IMR-90 (cell line): ENCODE measurements at regions of chr9 and their contacts with region 1.

Region 1: DNA sequence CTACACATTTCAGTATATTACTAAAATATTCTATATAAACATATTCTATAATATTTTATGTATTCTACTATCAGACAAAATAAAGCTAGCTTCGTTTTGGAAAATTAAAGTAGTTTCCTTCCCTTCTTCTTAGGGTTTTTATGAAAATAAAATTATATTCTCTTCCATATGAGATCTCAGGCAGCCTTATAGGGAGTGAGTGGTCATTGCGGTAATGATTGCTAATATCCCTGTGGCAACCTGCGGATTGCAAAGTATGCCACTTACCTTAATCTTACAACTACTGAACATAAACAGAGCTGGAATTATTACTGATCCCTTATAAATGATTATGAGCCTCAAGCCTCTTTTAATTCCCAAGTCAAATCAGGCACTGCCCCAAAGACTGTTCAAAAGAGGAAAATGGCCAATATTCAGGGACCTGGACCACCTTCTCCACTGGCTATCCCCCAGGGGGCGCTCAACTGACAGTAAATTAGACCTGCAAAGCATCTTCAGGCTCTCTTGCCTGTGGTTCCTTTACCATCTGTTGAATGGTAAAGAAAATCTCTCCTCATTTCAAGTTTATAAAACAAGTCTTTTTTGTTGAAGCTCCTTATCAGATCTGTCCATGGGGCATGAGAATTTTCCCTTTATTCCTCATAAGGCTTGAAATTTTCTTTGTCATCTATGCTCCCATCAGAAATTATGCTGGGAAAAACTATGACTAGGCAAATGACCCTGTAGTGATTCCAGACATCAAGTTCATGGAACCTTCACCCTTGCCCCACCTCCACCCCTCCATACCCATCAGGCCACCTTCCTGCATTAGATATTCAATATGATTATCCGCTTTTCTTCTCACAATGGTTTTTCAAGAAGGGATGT is 163.9 kb downstream of the CEMIP2 start:
- DNase-seq: peak; percentile 70
- ATAC-seq: peak; percentile 92
- H3K4me3 ChIP-seq: no peak overlapping the region
- H3K27ac ChIP-seq: no peak overlapping the region
- H3K4me1 ChIP-seq: no peaks in the 10 kb centered on the region
- H3K27me3 ChIP-seq: no peaks in the 10 kb centered on the region
- CTCF ChIP-seq: peak; percentile 83
- POLR2A ChIP-seq: no peak
- RAD21 ChIP-seq: peak; percentile 79

Region 2: DNA sequence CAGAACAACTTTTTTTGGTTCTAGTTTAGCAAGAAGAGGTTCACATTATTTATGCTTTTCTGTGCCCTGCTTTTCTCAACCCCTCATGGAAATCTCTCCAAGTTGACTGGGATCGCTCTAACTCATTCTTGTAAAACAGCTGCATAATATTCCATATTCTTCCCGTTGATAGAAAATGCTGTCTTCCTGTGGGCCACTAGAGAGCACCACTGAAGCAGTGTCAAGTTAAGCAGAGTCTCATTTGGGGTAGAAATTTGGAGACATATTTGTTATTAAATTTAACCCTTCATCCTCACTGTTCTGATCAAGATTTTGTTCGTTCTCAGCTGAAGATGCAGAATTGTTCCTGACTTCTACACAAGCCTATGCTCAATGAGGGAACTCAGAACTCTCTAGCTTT is 23.8 kb after region 1 on chr9:
- CTCF ChIA-PET with region 1: no interaction called
- POLR2A ChIA-PET with region 1: no interaction called
- dilution Hi-C with region 1: no loop called
- in situ Hi-C with region 1: no loop called
- intact Hi-C with region 1: no loop called
- DNase-seq: peak; percentile 6
- ATAC-seq: no peak
- H3K4me3 ChIP-seq: no peak overlapping the region
- H3K27ac ChIP-seq: no peak overlapping the region
- H3K4me1 ChIP-seq: no peaks in the 10 kb centered on the region
- H3K27me3 ChIP-seq: peaks cover 4% of the 10 kb centered on the region; the same call in 1 of the 2 replicates
- CTCF ChIP-seq: peak; percentile 39
- POLR2A ChIP-seq: no peak
- RAD21 ChIP-seq: peak; percentile 45; the same call in 1 of the 2 replicates

Region 3: DNA sequence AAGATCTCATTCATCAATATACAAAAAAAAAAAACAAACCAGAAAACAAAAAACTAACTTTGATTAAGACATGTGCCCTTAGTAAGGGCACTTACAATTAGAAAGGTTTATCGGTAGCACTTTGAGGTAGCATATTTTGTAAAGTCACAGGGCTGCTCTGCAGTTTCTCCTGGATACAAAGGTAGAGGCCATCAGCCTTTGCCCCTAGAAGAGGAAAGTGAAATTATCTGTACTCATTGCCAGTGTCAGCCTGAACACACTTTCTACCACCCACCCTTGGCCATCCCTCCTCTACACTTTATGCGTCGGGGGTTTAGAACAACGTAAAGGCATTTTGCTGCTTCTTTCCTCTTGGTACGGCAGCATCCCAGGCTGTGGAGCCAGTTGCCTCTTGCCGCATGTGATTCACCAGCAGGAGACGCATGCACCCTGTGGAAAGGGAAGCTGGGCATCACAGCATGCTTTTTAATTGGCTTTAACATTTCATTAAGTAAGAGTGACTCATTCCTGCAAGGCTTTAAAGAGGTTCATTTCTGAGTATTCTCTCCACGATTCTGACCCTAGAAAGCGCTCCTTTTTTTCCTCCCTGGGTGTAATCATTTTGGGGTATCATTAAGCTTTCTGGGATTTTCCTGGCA is 79.3 kb after region 1 on chr9:
- CTCF ChIA-PET with region 1: interaction called, 4 read pairs
- POLR2A ChIA-PET with region 1: no interaction called
- dilution Hi-C with region 1: no loop called
- in situ Hi-C with region 1: no loop called
- intact Hi-C with region 1: loop called (anchors 2 kb)
- DNase-seq: peak; percentile 61
- ATAC-seq: peak; percentile 53
- H3K4me3 ChIP-seq: no peak overlapping the region
- H3K27ac ChIP-seq: no peak overlapping the region
- H3K4me1 ChIP-seq: peaks cover 19% of the 10 kb centered on the region
- H3K27me3 ChIP-seq: no peaks in the 10 kb centered on the region
- CTCF ChIP-seq: peak; percentile 52
- POLR2A ChIP-seq: no peak
- RAD21 ChIP-seq: peak; percentile 54

Region 4: DNA sequence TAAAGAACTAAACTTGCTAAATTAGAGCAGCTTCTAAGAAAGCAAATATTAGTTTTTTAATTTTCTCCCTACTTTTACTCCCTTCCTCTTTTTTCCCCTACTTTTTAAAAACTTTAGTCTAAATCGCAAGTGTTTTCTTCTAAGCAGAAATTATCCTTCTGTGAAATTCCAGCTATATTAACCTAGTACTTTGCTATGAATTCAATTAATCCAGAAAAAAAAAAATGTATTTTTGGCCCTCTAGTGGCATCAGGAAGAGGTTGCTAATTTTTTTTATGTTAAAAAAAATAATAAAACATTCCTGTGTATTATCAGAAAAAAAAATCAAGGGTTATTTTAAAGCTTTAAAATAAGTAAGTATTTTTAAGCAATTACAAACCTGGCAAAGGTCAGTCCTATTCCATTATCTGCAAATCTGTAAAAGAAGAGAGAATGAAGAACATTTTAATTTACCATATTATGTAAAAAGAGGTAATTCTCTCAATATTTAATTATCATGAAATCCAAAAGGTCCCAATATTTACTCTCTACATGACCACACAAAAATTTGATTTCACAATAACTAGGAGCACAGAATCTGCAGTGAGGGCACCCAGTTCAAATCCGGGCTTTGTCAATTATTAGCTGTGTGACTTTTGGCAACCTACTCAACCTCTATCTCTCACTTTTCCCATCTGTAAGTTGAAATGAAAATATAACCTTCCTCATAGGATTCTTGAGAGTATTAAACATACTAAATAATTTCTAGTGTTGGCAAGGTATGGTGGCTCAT is 111.9 kb after region 1 on chr9:
- CTCF ChIA-PET with region 1: interaction called, 4 read pairs
- POLR2A ChIA-PET with region 1: no interaction called
- dilution Hi-C with region 1: no loop called
- in situ Hi-C with region 1: no loop called
- intact Hi-C with region 1: loop called (anchors 1 kb)
- DNase-seq: no peak
- ATAC-seq: no peak
- H3K4me3 ChIP-seq: no peak overlapping the region
- H3K27ac ChIP-seq: no peak overlapping the region
- H3K4me1 ChIP-seq: no peaks in the 10 kb centered on the region; the same call in 1 of the 2 replicates
- H3K27me3 ChIP-seq: no peaks in the 10 kb centered on the region
- CTCF ChIP-seq: peak; percentile 50
- POLR2A ChIP-seq: no peak
- RAD21 ChIP-seq: peak; percentile 36; the same call in 1 of the 2 replicates

Region 5: GRCh38 chr9:71768388-71769174 is 164.2 kb after region 1 on chr9 and contains the start of gene CEMIP2:
- CTCF ChIA-PET with region 1: interaction called, 3 read pairs
- POLR2A ChIA-PET with region 1: no interaction called
- dilution Hi-C with region 1: no loop called
- in situ Hi-C with region 1: loop called (anchors 10 kb)
- intact Hi-C with region 1: loop called (anchors 1 kb)
- DNase-seq: peak; percentile 86
- ATAC-seq: peak; percentile 86
- H3K4me3 ChIP-seq: peak within 1 kb of the TSS; percentile 98
- H3K27ac ChIP-seq: peak within 1 kb of the TSS; percentile 95
- H3K4me1 ChIP-seq: peaks cover 6% of the 10 kb centered on the region; the same call in 1 of the 2 replicates
- H3K27me3 ChIP-seq: 0 out of 2 replicates have a peak, but pooled peaks cover 1% of the 10 kb centered on the region
- CTCF ChIP-seq: peak; percentile 63
- POLR2A ChIP-seq: peak; percentile 98
- RAD21 ChIP-seq: peak; percentile 74
- total RNA-seq, gene CEMIP2: 58.6 and 65.2 TPM in 2 replicates

Region 6: GRCh38 chr9:71819115-71819739 is 214.8 kb after region 1 on chr9:
- CTCF ChIA-PET with region 1: no interaction called
- POLR2A ChIA-PET with region 1: no interaction called
- dilution Hi-C with region 1: no loop called
- in situ Hi-C with region 1: no loop called
- intact Hi-C with region 1: loop called (anchors 1 kb)
- DNase-seq: peak; percentile 39
- ATAC-seq: no peak
- H3K4me3 ChIP-seq: no peak overlapping the region
- H3K27ac ChIP-seq: no peak overlapping the region
- H3K4me1 ChIP-seq: no peaks in the 10 kb centered on the region
- H3K27me3 ChIP-seq: no peaks in the 10 kb centered on the region; the same call in none of the 2 replicates
- CTCF ChIP-seq: peak; percentile 81
- POLR2A ChIP-seq: no peak
- RAD21 ChIP-seq: peak; percentile 64